ENCODE measurements at regions of chr10 and their contacts with region 1.

Region 1: DNA sequence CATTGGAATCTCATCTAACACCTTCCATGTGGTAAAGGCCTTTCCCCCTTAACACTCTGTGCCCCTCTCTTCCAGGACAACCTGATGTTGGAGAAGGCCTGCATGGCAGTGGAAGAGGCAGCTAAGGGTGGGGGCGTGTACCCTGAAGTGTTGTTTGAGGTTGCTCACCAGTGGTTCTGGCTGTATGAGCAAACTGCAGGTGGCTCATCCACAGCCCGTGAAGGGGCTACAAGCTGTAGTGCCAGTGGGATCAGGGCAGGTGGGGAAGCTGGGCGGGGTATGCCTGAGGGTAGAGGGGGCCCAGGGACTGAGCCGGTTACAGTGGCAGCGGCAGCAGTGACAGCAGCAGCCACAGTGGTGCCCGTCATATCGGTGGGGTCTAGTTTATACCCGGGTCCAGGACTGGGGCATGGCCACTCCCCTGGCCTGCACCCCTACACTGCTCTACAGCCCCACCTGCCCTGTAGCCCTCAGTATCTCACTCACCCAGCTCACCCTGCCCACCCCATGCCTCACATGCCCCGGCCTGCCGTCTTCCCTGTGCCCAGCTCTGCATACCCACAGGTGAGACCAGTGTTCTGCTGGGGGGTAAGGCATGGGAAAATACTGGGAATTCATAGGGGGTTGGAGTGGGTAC is 12.4 kb downstream of the NDST2 start:
- DNase-seq: peak in 1 of 10 donors; percentile 59
- ATAC-seq: peak; percentile 31 to 35
- H3K4me3 Mint-ChIP-seq: peak overlapping the region in 1 of 10 donors; percentile 45
- H3K27ac Mint-ChIP-seq: peak overlapping the region in 6 of 10 donors; percentile 37 to 83 (median 52)
- H3K4me1 Mint-ChIP-seq: peaks cover 6 to 18% (median 11%) of the 10 kb centered on the region in 4 donors
- H3K27me3 Mint-ChIP-seq: no peaks in the 10 kb centered on the region

Region 2: GRCh38 chr10:73730153-73730906 is 68.7 kb before region 1 on chr10:
- POLR2A ChIA-PET with region 1: no interaction called
- DNase-seq: peak; percentile 70 to 95 (median 89)
- ATAC-seq: peak; percentile 90 to 93
- H3K4me3 Mint-ChIP-seq: peak overlapping the region; percentile 94 to 100 (median 98)
- H3K27ac Mint-ChIP-seq: peak overlapping the region; percentile 94 to 99 (median 97)
- H3K4me1 Mint-ChIP-seq: peaks cover 9 to 24% (median 16%) of the 10 kb centered on the region in 4 donors
- H3K27me3 Mint-ChIP-seq: no peaks in the 10 kb centered on the region

Region 3: GRCh38 chr10:73785221-73785720 is 13.8 kb before region 1 on chr10 and contains the start of gene ZSWIM8:
- POLR2A ChIA-PET with region 1: interaction called, 70 read pairs
- DNase-seq: peak; percentile 76 to 92 (median 86)
- ATAC-seq: peak; percentile 81 to 83
- H3K4me3 Mint-ChIP-seq: peak within 1 kb of the TSS; percentile 89 to 100 (median 98)
- H3K27ac Mint-ChIP-seq: peak within 1 kb of the TSS; percentile 97 to 99 (median 98)
- H3K4me1 Mint-ChIP-seq: peaks cover 28 to 67% (median 56%) of the 10 kb centered on the region in 4 donors
- H3K27me3 Mint-ChIP-seq: no peaks in the 10 kb centered on the region
- polyA plus RNA-seq, gene ZSWIM8: 12.3 to 18.5 (median 13.4) TPM

Region 4: DNA sequence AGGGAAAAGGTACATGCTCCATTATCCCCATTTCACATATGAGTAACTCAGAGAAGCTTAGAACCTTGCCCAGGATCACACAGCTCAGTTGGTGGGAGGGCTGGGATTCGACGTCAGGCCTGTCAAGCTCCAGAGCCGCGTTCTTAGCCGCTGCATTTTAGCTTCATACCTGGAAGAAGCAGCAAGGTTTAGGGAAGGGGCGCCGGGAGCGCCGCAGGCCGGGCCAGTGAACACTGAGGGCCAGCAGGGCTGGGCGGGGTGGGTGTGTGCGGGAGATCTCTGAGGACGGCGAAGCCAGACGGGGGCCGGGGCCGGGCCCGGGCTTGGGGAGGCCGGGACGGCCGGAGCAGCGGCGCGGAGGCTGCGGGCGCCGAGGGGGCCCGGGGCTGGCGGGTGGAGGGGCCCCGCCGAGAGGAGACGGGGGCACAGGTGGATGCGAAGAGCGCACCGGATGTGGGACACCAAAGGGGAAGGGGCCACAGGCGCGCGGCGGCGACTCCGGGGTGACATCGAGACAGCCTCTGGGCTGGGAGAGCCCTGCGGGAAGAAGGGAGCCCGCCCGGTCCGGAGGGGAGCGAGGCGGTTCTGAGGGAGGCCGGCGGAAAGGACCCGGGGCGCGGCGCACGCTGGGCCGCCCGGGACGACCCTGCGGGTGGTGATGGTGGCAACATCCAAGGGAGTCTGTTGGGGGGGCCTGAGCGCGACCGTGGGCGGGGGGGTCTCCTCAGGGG is 11.9 kb after region 1 on chr10:
- POLR2A ChIA-PET with region 1: interaction called, 56 read pairs
- DNase-seq: peak; percentile 21 to 81 (median 56)
- ATAC-seq: peak; percentile 29 to 45
- H3K4me3 Mint-ChIP-seq: peak overlapping the region; percentile 84 to 93 (median 89)
- H3K27ac Mint-ChIP-seq: peak overlapping the region; percentile 82 to 97 (median 95)
- H3K4me1 Mint-ChIP-seq: peaks cover 24 to 55% (median 46%) of the 10 kb centered on the region in 4 donors
- H3K27me3 Mint-ChIP-seq: no peaks in the 10 kb centered on the region

Region 5: GRCh38 chr10:73857446-73857845 is 58.4 kb after region 1 on chr10:
- POLR2A ChIA-PET with region 1: no interaction called
- DNase-seq: no peak
- ATAC-seq: peak; percentile 31 to 53
- H3K4me3 Mint-ChIP-seq: peak overlapping the region; percentile 20 to 75 (median 62)
- H3K27ac Mint-ChIP-seq: peak overlapping the region; percentile 78 to 94 (median 90)
- H3K4me1 Mint-ChIP-seq: peaks cover 26 to 84% (median 72%) of the 10 kb centered on the region in 4 donors
- H3K27me3 Mint-ChIP-seq: no peaks in the 10 kb centered on the region